Ovary (tissue), 10 donors: ENCODE measurements at regions of chr3 and their contacts with region 1.

Region 1: DNA sequence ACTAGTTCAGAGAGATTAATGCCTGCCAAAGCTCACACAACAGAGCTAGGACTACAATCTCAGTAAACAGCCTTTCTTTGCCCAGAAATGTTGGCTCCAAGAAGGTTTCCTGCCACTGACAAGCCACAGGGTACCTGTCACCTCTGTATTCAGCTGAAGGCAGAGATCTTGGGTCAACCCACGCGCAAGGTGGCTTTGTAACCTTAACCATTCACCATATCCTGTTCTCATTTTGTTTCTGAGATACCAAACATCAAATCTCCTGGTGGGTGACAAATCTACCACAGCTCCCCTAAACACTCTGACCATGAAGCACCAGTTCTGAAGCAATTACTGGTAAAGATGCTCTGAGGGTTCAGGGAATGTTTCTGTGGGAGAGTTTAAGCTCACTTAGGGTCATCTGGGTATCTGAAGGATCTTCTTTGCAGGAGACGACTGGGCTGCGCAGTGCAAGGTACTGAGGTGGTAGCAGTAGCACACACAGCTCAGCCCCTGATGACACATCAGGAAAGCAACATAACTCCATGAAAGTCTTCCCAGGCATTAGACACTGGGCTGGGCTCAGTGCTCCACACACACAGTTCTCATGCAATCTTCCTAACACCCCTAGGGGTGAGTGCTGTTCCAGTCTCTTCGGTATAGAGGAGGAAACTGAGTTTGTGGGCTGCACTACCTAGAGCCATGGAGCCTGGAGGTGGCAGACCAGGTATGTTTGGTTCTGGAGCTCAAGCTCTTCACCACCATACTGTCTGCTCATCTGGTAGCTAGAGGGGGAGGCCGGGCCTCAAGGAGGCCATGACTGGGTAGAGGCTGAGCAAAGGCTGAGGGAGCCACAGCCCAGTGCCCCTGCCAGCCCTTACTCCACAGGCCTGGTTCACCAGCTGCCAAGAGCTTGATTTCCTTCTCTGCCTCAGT is 7.7 kb downstream of the CXCR6 start:
- DNase-seq: no peak
- H3K4me3 ChIP-seq: no peak overlapping the region
- H3K27ac ChIP-seq: no peak overlapping the region
- H3K4me1 ChIP-seq: peaks cover 4% of the 10 kb centered on the region
- H3K27me3 ChIP-seq: no peaks in the 10 kb centered on the region
- CTCF ChIP-seq: no peak
- EP300 ChIP-seq: no peak
- POLR2A ChIP-seq: no peak

Region 2: GRCh38 chr3:46017720-46018119 is 66.8 kb after region 1 on chr3:
- intact Hi-C with region 1: no loop called
- DNase-seq: no peak
- H3K4me3 ChIP-seq: no peak overlapping the region
- H3K27ac ChIP-seq: no peak overlapping the region
- H3K4me1 ChIP-seq: no peaks in the 10 kb centered on the region
- H3K27me3 ChIP-seq: no peaks in the 10 kb centered on the region
- CTCF ChIP-seq: no peak
- EP300 ChIP-seq: no peak
- POLR2A ChIP-seq: no peak

Region 3: GRCh38 chr3:46062679-46063078 is 111.7 kb after region 1 on chr3:
- intact Hi-C with region 1: loop called in 1 of 4 experiments (anchors 5 kb)
- DNase-seq: no peak
- H3K4me3 ChIP-seq: no peak overlapping the region
- H3K27ac ChIP-seq: no peak overlapping the region
- H3K4me1 ChIP-seq: peaks cover 4% of the 10 kb centered on the region
- H3K27me3 ChIP-seq: no peaks in the 10 kb centered on the region
- CTCF ChIP-seq: no peak
- EP300 ChIP-seq: no peak
- POLR2A ChIP-seq: no peak

Region 4: DNA sequence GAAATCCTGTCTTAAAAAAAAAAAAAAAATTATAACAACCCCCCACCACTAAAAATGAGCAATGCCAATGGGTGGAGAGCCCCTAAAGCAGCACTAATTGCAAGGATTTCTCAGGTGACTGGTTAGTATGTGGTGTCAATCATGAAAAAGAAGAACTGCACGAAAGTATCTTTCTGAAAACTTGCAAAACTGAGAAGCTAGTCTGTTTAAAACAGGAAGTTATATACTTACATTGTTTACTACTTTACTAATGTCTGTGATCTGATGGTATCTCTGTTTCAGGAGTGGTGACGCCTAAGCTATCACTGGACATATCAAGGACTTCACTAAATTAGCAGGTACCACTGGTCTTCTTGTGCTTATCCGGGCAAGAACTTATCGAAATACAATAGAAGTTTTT is 291.2 kb after region 1 on chr3 and contains the start of gene CCR3:
- intact Hi-C with region 1: no loop called
- DNase-seq: no peak
- H3K4me3 ChIP-seq: no peak within 1 kb of the TSS
- H3K27ac ChIP-seq: no peak within 1 kb of the TSS
- H3K4me1 ChIP-seq: no peaks in the 10 kb centered on the region
- H3K27me3 ChIP-seq: no peaks in the 10 kb centered on the region
- CTCF ChIP-seq: no peak
- EP300 ChIP-seq: no peak
- POLR2A ChIP-seq: no peak
- total RNA-seq, gene CCR3: not detected